ENCODE measurements at regions of chr11 and their contacts with region 1.

Region 1: GRCh38 chr11:75233742-75234172 is 6.8 kb upstream of the TPBGL start:
- DNase-seq: peak; percentile 37
- H3K4me3 ChIP-seq: no peak overlapping the region
- H3K27ac ChIP-seq: no peak overlapping the region
- H3K4me1 ChIP-seq: no peaks in the 10 kb centered on the region
- H3K27me3 ChIP-seq: no peaks in the 10 kb centered on the region
- CTCF ChIP-seq: no peak

Region 2: DNA sequence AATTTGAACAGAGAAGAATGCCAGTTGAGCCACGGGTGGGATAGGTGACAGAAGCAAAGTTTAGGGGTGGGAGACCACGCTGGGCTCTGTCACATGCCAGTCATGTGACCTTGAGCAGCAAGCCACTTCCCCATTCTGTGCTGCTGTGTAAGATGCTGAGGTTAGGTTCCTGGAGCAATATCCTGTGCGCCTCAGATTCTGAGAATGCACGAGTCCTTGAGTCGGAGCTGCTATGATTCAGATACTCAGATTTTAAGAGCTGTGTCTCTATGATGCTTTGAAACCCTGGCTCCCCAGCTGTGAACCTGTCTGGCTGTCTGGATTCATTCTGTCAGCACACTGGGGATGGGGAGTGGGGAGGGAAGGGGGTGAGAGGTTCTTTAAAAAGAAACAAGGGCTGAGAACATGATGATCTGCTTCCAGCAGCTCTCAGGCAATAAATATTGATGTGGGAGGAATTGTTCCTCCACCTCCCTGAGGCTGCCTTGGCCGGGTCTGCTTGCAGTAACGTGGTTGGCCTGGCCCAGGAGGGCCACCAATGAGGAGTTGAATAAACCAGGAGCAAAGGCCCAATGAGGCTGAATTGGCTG is 58.9 kb before region 1 on chr11:
- CTCF ChIA-PET with region 1: no interaction called
- dilution Hi-C with region 1: no loop called
- in situ Hi-C with region 1: no loop called
- intact Hi-C with region 1: no loop called
- DNase-seq: no peak
- H3K4me3 ChIP-seq: no peak overlapping the region
- H3K27ac ChIP-seq: no peak overlapping the region
- H3K4me1 ChIP-seq: no peaks in the 10 kb centered on the region
- H3K27me3 ChIP-seq: peaks cover 2% of the 10 kb centered on the region
- CTCF ChIP-seq: no peak

Region 3: GRCh38 chr11:75263944-75264349 is 30.2 kb after region 1 on chr11:
- CTCF ChIA-PET with region 1: no interaction called
- dilution Hi-C with region 1: loop called (anchors 5 kb)
- in situ Hi-C with region 1: no loop called
- intact Hi-C with region 1: no loop called
- DNase-seq: no peak
- H3K4me3 ChIP-seq: no peak overlapping the region
- H3K27ac ChIP-seq: no peak overlapping the region
- H3K4me1 ChIP-seq: no peaks in the 10 kb centered on the region
- H3K27me3 ChIP-seq: no peaks in the 10 kb centered on the region
- CTCF ChIP-seq: no peak

Region 4: DNA sequence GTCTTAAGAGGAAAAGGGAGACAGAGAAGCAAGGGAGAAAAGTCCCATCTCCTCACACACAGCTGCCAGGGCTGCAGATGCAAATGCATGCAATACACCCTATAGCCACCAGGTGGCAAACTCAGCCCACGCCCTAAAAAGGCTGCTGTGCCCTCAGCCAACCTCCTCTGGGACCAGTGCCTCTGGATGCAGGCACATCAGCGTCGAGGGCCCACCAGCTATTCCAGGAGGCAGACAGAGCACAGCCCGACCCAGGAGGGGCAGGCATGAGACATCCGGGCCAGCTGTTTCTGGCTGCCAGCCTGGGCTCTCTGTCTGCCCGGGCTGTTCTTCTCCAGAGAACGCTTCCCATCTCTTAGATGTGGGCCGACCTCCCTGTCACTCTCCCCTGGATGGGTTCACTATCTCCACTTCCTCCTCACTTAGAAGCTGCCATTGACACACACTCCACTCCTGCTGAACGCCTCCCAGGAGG is 46.5 kb after region 1 on chr11:
- CTCF ChIA-PET with region 1: no interaction called
- dilution Hi-C with region 1: no loop called
- in situ Hi-C with region 1: no loop called
- intact Hi-C with region 1: no loop called
- DNase-seq: peak; percentile 51
- H3K4me3 ChIP-seq: no peak overlapping the region
- H3K27ac ChIP-seq: no peak overlapping the region
- H3K4me1 ChIP-seq: no peaks in the 10 kb centered on the region
- H3K27me3 ChIP-seq: no peaks in the 10 kb centered on the region
- CTCF ChIP-seq: peak; percentile 95 to 98

Region 5: GRCh38 chr11:75319035-75319877 is 85.5 kb after region 1 on chr11:
- CTCF ChIA-PET with region 1: no interaction called
- dilution Hi-C with region 1: no loop called
- in situ Hi-C with region 1: no loop called
- intact Hi-C with region 1: no loop called
- DNase-seq: peak; percentile 31
- H3K4me3 ChIP-seq: no peak overlapping the region
- H3K27ac ChIP-seq: no peak overlapping the region
- H3K4me1 ChIP-seq: peaks cover 14% of the 10 kb centered on the region
- H3K27me3 ChIP-seq: no peaks in the 10 kb centered on the region
- CTCF ChIP-seq: no peak

Region 6: GRCh38 chr11:76131671-76132631 is 898.2 kb after region 1 on chr11:
- CTCF ChIA-PET with region 1: no interaction called
- dilution Hi-C with region 1: no loop called
- in situ Hi-C with region 1: no loop called
- intact Hi-C with region 1: no loop called
- DNase-seq: no peak
- H3K4me3 ChIP-seq: no peak overlapping the region
- H3K27ac ChIP-seq: no peak overlapping the region
- H3K4me1 ChIP-seq: no peaks in the 10 kb centered on the region
- H3K27me3 ChIP-seq: no peaks in the 10 kb centered on the region
- CTCF ChIP-seq: no peak

Measured in mammary epithelial cell (primary cell).